ENCODE measurements at regions of chr12 and their contacts with region 1.

Region 1: GRCh38 chr12:56152318-56153033 is at the start of gene MYL6B:
- DNase-seq: peak; percentile 85 to 97 (median 90)
- ATAC-seq: peak; percentile 86
- H3K4me3 ChIP-seq: peak within 1 kb of the TSS; percentile 55
- H3K27ac ChIP-seq: peak within 1 kb of the TSS; percentile 96
- H3K4me1 ChIP-seq: peaks cover 37 to 42% of the 10 kb centered on the region in 2 experiments; a peak in 4 of 5 replicates
- H3K27me3 ChIP-seq: no peaks in the 10 kb centered on the region
- CTCF ChIP-seq: no peak
- EP300 ChIP-seq: peak; percentile 69; the same call in 1 of the 2 replicates
- POLR2A ChIP-seq: peak; percentile 89
- RAD21 ChIP-seq: no peak
- polyA plus RNA-seq, gene MYL6B: 48.2 to 68.6 TPM

Region 2: DNA sequence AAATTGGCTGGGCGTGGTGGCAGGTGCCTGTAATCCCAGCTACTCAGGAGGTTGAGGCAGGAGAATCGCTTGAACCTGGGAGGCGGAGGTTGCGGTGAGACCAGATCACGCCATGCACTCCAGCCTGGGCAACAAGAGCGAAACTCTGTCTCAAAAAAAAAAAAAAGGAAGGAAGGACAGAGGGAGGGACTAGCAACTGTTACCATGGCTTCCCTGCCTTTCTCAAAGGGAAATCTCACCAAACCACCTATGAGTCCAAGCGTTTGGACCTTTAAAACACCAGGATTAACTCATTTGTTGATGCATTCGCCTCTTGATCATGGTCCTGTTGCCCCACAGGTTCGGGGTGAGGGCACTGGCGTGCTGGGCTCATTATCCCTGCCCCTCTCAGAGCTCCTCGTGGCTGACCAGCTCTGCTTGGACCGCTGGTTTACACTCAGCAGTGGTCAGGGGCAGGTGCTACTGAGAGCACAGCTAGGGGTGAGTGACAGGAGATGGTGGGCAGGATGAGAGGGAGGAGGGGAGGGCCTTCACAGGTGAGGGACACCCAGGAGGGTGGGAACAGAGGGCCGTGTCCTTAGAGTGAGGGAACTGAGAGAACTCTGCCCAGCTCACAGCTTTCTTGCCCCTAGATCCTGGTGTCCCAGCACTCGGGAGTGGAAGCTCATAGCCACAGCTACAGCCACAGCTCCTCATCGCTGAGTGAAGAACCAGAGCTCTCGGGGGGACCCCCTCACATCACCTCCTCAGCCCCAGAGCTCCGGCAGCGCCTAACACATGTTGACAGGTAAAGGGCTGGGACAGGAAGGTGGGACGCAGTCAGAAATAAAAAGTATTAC is 10.3 kb before region 1 on chr12:
- CTCF ChIA-PET with region 1: no interaction called
- POLR2A ChIA-PET with region 1: interaction called, 10 read pairs
- in situ Hi-C with region 1: no loop called
- intact Hi-C with region 1: no loop called
- DNase-seq: no peak
- ATAC-seq: no peak
- H3K4me3 ChIP-seq: no peak overlapping the region
- H3K27ac ChIP-seq: no peak overlapping the region
- H3K4me1 ChIP-seq: peaks cover 2 to 4% of the 10 kb centered on the region in 2 experiments; a peak in 2 of 5 replicates
- H3K27me3 ChIP-seq: no peaks in the 10 kb centered on the region
- CTCF ChIP-seq: no peak
- EP300 ChIP-seq: no peak
- POLR2A ChIP-seq: 0 out of 2 replicates have a peak, but pooled peaks have one; percentile 17
- RAD21 ChIP-seq: no peak

Region 3: DNA sequence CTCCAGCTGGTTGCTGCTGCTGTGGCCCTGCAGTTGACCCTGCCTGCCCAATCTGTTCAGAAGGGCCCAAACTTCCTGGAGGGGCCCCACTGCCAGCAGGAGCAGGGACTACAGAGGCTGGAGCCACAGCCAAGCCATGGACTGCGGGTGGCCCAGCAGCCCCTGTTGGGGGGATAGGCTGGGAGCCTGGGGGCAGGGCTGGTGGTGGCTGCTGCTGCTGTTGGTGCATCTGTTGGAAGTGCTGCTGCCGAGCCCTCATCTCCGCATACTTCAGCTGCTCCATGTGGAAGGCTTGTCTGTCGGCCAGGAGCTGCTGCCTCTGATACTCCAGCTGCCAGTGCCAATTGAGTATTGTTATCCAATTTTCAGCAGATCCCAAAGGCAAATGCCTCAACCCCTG is 12.9 kb after region 1 on chr12:
- CTCF ChIA-PET with region 1: no interaction called
- POLR2A ChIA-PET with region 1: interaction called, 13 read pairs
- in situ Hi-C with region 1: no loop called
- intact Hi-C with region 1: no loop called
- DNase-seq: no peak
- ATAC-seq: no peak
- H3K4me3 ChIP-seq: no peak overlapping the region
- H3K27ac ChIP-seq: no peak overlapping the region
- H3K4me1 ChIP-seq: peaks cover 4 to 14% of the 10 kb centered on the region in 2 experiments; a peak in 4 of 5 replicates
- H3K27me3 ChIP-seq: no peaks in the 10 kb centered on the region
- CTCF ChIP-seq: no peak
- EP300 ChIP-seq: no peak
- POLR2A ChIP-seq: no peak
- RAD21 ChIP-seq: no peak

Region 4: GRCh38 chr12:56299853-56300643 is 147.6 kb after region 1 on chr12 and contains the start of gene CS:
- CTCF ChIA-PET with region 1: no interaction called
- POLR2A ChIA-PET with region 1: no interaction called
- in situ Hi-C with region 1: no loop called
- intact Hi-C with region 1: no loop called
- DNase-seq: peak; percentile 96 to 99 (median 97)
- ATAC-seq: peak; percentile 94
- H3K4me3 ChIP-seq: peak within 1 kb of the TSS; percentile 64
- H3K27ac ChIP-seq: peak within 1 kb of the TSS; percentile 98
- H3K4me1 ChIP-seq: peaks cover 22 to 42% of the 10 kb centered on the region in 2 experiments
- H3K27me3 ChIP-seq: no peaks in the 10 kb centered on the region
- CTCF ChIP-seq: no peak
- EP300 ChIP-seq: peak; percentile 16; the same call in 1 of the 2 replicates
- POLR2A ChIP-seq: peak; percentile 95
- RAD21 ChIP-seq: no peak
- polyA plus RNA-seq, gene CS: 99.9 to 239 TPM